Right ventricle myocardium superior (tissue), 1 donor: ENCODE measurements at regions of chr20 and their contacts with region 1.

Region 1: GRCh38 chr20:8670893-8671215 is 398.0 kb upstream of the PLCB4 start:
- DNase-seq: no peak
- ATAC-seq: peak; percentile 48

Region 2: DNA sequence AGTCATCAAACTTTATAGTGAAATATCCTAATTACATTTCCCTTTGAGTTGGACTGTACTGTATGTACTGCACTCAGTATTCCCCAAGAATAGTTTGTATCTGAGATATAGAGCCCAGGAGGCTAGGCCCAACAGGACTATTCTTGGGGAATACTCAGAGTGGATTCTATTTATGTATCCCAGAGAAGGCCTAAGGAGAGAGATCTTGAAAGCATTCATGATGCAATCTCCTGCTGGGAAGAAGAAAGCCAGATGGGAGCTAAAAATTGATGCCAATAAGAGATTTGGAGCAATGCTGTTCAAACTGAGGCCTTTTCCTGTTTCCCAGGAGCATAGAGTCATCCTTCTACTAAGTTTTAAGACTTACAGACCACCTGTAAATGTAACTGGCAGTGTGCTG is 54.1 kb before region 1 on chr20:
- intact Hi-C with region 1: loop called (anchors 10 kb)
- DNase-seq: no peak
- ATAC-seq: peak; percentile 81